ENCODE measurements at regions of chr2 and their contacts with region 1.

Region 1: GRCh38 chr2:209334198-209335017 is 89.4 kb upstream of the MAP2 start:
- DNase-seq: peak; percentile 6 to 62
- ATAC-seq: peak; percentile 85 to 90
- H3K4me3 ChIP-seq: no peak overlapping the region
- H3K27ac ChIP-seq: no peak overlapping the region
- H3K4me1 ChIP-seq: no peaks in the 10 kb centered on the region
- CTCF ChIP-seq: peak; percentile 95
- EP300 ChIP-seq: no peak
- POLR2A ChIP-seq: no peak
- RAD21 ChIP-seq: peak; percentile 94 to 95

Region 2: GRCh38 chr2:208392300-208393080 is 941.9 kb before region 1 on chr2:
- CTCF ChIA-PET with region 1: interaction called, 11 read pairs
- POLR2A ChIA-PET with region 1: no interaction called
- DNase-seq: no peak
- ATAC-seq: peak in 1 of 2 experiments; percentile 45; a peak in 1 of 6 replicates
- H3K4me3 ChIP-seq: no peak overlapping the region
- H3K27ac ChIP-seq: no peak overlapping the region
- H3K4me1 ChIP-seq: no peaks in the 10 kb centered on the region
- CTCF ChIP-seq: no peak
- EP300 ChIP-seq: no peak
- POLR2A ChIP-seq: no peak
- RAD21 ChIP-seq: no peak

Region 3: GRCh38 chr2:208916881-208917280 is 417.5 kb before region 1 on chr2:
- CTCF ChIA-PET with region 1: no interaction called
- POLR2A ChIA-PET with region 1: no interaction called
- DNase-seq: no peak
- ATAC-seq: no peak
- H3K4me3 ChIP-seq: no peak overlapping the region
- H3K27ac ChIP-seq: no peak overlapping the region
- H3K4me1 ChIP-seq: no peaks in the 10 kb centered on the region
- CTCF ChIP-seq: no peak
- EP300 ChIP-seq: no peak
- POLR2A ChIP-seq: no peak
- RAD21 ChIP-seq: no peak

Region 4: GRCh38 chr2:209145941-209146681 is 188.3 kb before region 1 on chr2:
- CTCF ChIA-PET with region 1: no interaction called
- POLR2A ChIA-PET with region 1: no interaction called
- DNase-seq: no peak
- ATAC-seq: no peak
- H3K4me3 ChIP-seq: no peak overlapping the region
- H3K27ac ChIP-seq: no peak overlapping the region
- H3K4me1 ChIP-seq: no peaks in the 10 kb centered on the region
- CTCF ChIP-seq: no peak
- EP300 ChIP-seq: no peak
- POLR2A ChIP-seq: no peak
- RAD21 ChIP-seq: no peak

Region 5: DNA sequence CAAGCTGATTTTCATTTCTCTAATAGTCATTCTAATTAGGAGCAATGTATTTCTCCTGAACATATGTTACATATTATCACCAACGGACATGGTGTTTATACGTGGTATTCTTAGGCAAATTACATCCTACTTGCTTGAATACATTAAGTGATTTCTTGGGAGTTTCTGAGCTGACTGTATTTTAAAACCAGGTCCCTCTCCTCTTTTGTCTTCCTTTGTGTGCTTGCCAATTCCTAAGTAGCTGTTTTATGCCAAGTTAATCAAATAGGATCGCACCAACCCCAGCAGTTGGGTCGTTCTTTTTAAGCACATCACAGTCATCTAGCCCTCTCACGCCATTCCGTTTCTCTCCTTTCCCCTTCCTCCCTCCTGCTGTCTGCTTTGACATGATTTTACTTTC is 14.0 kb after region 1 on chr2:
- CTCF ChIA-PET with region 1: interaction called, 30 read pairs
- POLR2A ChIA-PET with region 1: no interaction called
- DNase-seq: no peak
- ATAC-seq: no peak
- H3K4me3 ChIP-seq: no peak overlapping the region
- H3K27ac ChIP-seq: no peak overlapping the region
- H3K4me1 ChIP-seq: no peaks in the 10 kb centered on the region
- CTCF ChIP-seq: no peak
- EP300 ChIP-seq: no peak
- POLR2A ChIP-seq: no peak
- RAD21 ChIP-seq: no peak

Region 6: GRCh38 chr2:209368900-209369299 is 34.5 kb after region 1 on chr2:
- CTCF ChIA-PET with region 1: interaction called, 22 read pairs
- POLR2A ChIA-PET with region 1: interaction called, 4 read pairs
- DNase-seq: peak; percentile 39 to 83
- ATAC-seq: peak; percentile 98 to 99
- H3K4me3 ChIP-seq: no peak overlapping the region
- H3K27ac ChIP-seq: peak overlapping the region; percentile 52 to 72; a peak in 5 of 6 replicates
- H3K4me1 ChIP-seq: peaks cover 9% of the 10 kb centered on the region; the same call in 2 of the 3 replicates
- CTCF ChIP-seq: no peak
- EP300 ChIP-seq: no peak
- POLR2A ChIP-seq: no peak
- RAD21 ChIP-seq: no peak

Region 7: DNA sequence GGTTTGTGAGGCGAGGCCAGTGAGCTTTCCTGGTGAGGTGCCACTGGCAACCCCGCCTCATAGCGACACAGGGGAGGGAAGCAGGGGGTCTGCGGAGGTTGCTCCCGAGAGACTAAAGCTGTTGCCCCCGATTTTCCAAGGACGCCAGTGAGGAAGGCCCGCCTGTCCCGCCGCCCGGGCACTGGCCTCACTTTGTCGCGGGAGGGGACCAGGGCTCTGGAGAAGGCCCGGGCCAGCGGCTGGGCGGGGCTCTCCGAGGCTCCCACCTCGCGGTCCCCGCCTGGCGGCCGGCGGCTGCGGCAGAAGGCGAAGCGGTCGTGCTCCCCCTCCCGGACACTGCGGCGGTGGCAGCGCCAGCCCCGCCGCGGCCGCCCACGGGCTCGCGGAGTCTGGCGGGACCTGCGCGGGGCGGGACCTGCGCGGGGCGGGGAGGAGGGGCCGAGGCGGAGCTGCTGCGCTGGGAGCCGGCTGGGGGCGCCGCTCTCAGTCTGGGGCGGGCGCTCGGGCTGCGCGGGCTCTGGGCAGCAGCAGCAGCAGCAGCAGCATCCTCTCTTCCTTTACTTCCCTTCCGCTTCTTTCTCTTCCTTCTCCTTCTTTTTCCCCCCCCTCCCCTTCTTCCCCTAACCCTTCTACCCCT is 89.3 kb after region 1 on chr2 and contains the start of gene MAP2:
- CTCF ChIA-PET with region 1: interaction called, 119 read pairs
- POLR2A ChIA-PET with region 1: interaction called, 5 read pairs
- DNase-seq: peak; percentile 55 to 77
- ATAC-seq: peak; percentile 95 to 98
- H3K4me3 ChIP-seq: peak within 1 kb of the TSS; percentile 71
- H3K27ac ChIP-seq: peak within 1 kb of the TSS; percentile 68 to 85; a peak in 5 of 6 replicates
- H3K4me1 ChIP-seq: peaks cover 21% of the 10 kb centered on the region; the same call in 2 of the 3 replicates
- CTCF ChIP-seq: peak; percentile 98
- EP300 ChIP-seq: no peak
- POLR2A ChIP-seq: no peak; the same call in 1 of the 2 replicates
- RAD21 ChIP-seq: peak; percentile 46 to 90; a peak in 4 of 5 replicates
- polyA plus RNA-seq, gene MAP2: 1.8 and 2.2 TPM in 2 replicates

Region 8: DNA sequence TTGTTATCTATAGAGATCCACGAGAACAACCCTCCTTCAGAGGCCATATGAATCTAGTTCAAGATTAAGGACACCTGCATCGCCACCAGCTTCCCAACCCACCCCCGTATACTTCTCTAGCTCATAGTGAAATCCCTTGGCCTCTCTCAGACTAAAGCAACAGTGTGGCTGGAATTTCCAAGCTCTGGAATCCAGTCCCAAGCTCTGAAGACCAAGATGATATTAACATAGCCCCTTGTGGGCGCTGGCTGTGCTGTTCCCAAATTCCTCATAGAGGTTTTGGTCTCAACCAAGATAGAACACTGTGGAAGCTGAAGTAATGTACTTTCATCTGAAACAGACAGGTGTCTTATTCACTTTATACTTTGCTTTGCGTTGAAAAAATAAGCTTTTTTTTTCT is 229.0 kb after region 1 on chr2:
- CTCF ChIA-PET with region 1: interaction called, 67 read pairs
- POLR2A ChIA-PET with region 1: no interaction called
- DNase-seq: no peak
- ATAC-seq: no peak
- H3K4me3 ChIP-seq: no peak overlapping the region
- H3K27ac ChIP-seq: no peak overlapping the region
- H3K4me1 ChIP-seq: no peaks in the 10 kb centered on the region
- CTCF ChIP-seq: no peak
- EP300 ChIP-seq: no peak
- POLR2A ChIP-seq: no peak
- RAD21 ChIP-seq: no peak